Activated CD4-positive, alpha-beta memory T cell treated with anti-CD3 and anti-CD28 coated beads for 36 hours (primary cell): ENCODE measurements at regions of chr4 and their contacts with region 1.

Region 1: DNA sequence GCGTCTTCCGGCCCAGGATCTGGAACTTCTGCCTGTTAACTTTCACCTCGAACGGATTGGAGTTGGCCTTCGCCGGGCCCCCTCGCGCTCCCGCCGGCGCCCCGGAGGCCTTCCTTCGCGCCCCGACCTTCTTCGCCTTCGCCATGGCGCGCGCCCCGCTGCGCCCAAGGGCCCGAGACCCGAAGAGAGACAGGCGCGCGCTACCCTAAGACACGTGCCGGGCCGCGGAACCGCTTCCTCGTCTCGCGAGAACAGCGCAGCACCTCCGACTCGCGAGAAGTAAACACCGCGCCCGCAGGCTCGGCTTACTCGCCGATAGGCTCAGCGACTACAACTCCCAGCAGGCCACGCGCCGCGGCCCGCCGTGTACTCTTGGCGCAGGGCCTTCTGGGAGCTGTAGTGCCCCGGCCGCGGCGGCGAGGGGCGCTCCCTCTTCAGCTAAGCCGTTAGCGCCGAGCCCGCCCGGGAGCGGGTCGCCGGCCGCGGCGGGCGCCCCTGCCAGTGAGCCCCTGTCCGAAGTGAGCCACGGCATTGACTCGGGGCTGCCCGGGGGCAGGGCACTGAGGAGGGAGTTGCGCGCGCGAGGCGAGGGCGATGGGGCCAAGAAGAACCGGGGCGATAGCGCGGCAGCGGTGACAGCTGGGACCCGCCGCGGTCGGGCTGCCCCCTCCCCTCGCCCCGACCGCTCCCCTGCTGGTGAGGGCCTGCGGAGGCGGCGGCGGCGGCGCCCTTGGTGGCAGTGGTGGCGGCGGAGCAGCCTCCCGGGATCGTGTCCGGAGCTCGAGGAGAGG is at the starts of genes GRK4 and NOP14:
- DNase-seq: peak; percentile 98
- H3K4me3 Mint-ChIP-seq: peak within 1 kb of the TSS; percentile 78
- H3K27ac Mint-ChIP-seq: peak within 1 kb of the TSS; percentile 94
- H3K4me1 Mint-ChIP-seq: peaks cover 30% of the 10 kb centered on the region
- H3K27me3 Mint-ChIP-seq: no peaks in the 10 kb centered on the region
- total RNA-seq, gene GRK4: 2.3 to 3.0 TPM
- total RNA-seq, gene NOP14: 67.4 to 73.4 TPM

Region 2: GRCh38 chr4:2468445-2469192 is 494.8 kb before region 1 on chr4 and contains the start of gene RNF4:
- CTCF ChIA-PET with region 1: no interaction called
- POLR2A ChIA-PET with region 1: no interaction called
- intact Hi-C with region 1: loop called (anchors 5 kb)
- DNase-seq: peak; percentile 98
- H3K4me3 Mint-ChIP-seq: peak within 1 kb of the TSS; percentile 97
- H3K27ac Mint-ChIP-seq: peak within 1 kb of the TSS; percentile 98
- H3K4me1 Mint-ChIP-seq: peaks cover 42% of the 10 kb centered on the region
- H3K27me3 Mint-ChIP-seq: no peaks in the 10 kb centered on the region
- total RNA-seq, gene RNF4: 84.6 to 90.3 TPM

Region 3: GRCh38 chr4:2637956-2638552 is 325.3 kb before region 1 on chr4:
- CTCF ChIA-PET with region 1: no interaction called
- POLR2A ChIA-PET with region 1: no interaction called
- intact Hi-C with region 1: no loop called
- DNase-seq: no peak
- H3K4me3 Mint-ChIP-seq: no peak overlapping the region
- H3K27ac Mint-ChIP-seq: no peak overlapping the region
- H3K4me1 Mint-ChIP-seq: no peaks in the 10 kb centered on the region
- H3K27me3 Mint-ChIP-seq: no peaks in the 10 kb centered on the region

Region 4: DNA sequence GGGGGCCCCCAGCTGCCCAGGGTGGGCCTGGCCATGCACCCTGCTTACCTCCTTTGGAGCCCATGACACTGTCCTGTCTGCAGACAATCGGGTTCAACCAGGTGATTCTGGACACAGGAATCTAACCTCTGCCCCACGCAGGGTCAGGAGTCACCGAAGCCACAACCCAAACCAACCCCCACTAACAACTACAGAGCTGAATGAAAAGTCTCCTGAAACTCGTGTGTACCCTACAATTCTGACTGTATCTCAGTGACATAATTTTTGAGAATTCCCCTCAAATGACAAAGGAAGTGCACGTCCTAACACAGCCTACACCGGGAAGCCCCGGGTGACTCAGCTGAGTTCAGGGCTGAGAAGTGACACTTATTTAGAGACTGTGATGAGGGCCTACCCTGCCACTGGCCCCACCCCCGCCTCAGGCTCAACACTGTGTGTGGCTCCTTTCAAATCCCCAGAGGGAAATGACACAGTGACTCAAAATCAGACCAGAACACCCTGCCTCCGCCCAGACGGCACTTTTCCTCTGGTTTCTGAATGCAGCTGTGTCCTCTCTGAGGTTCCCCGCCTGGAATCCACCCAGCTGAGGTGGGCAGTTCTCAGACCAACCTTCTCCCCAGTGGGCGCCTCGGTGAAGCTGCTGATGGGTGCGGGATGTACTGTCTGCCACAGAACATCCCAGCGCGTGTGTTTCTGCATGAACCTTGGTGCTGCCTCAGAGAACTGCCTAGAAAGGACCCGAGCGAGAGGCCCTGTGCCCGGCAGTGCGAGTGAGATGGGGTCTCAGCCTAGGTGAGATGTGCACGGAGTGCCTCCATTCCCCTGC is 217.2 kb before region 1 on chr4:
- CTCF ChIA-PET with region 1: interaction called, 4 read pairs
- POLR2A ChIA-PET with region 1: interaction called, 10 read pairs
- intact Hi-C with region 1: loop called (anchors 1 kb)
- DNase-seq: peak; percentile 98
- H3K4me3 Mint-ChIP-seq: peak overlapping the region; percentile 54
- H3K27ac Mint-ChIP-seq: peak overlapping the region; percentile 90
- H3K4me1 Mint-ChIP-seq: peaks cover 61% of the 10 kb centered on the region
- H3K27me3 Mint-ChIP-seq: no peaks in the 10 kb centered on the region

Region 5: DNA sequence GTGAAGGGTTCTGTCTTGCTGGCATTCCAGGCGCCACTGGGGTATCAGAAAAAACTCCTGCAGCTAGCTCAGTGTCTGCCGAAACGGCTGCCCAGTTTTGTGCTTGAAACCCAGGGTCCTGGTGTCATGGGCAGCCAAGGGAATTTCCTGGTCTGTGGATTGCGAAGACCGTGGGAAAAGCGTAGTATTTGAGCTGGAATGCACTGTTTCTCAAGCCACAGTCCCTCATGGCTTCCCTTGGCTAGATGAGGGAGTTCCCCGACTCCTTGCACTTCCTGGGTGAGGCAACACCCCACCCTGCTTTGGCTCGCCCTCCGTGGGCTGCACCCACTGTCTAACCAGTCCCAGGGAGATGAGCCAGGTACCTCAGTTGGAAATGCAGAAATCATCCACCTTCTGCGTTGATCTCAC is 40.2 kb before region 1 on chr4:
- CTCF ChIA-PET with region 1: no interaction called
- POLR2A ChIA-PET with region 1: no interaction called
- intact Hi-C with region 1: no loop called
- DNase-seq: no peak
- H3K4me3 Mint-ChIP-seq: no peak overlapping the region
- H3K27ac Mint-ChIP-seq: peak overlapping the region; percentile 57
- H3K4me1 Mint-ChIP-seq: peaks cover 46% of the 10 kb centered on the region
- H3K27me3 Mint-ChIP-seq: no peaks in the 10 kb centered on the region

Region 6: GRCh38 chr4:2977211-2978088 is 14.1 kb after region 1 on chr4:
- CTCF ChIA-PET with region 1: interaction called, 25 read pairs
- POLR2A ChIA-PET with region 1: interaction called, 3 read pairs
- intact Hi-C with region 1: no loop called
- DNase-seq: no peak
- H3K4me3 Mint-ChIP-seq: no peak overlapping the region
- H3K27ac Mint-ChIP-seq: no peak overlapping the region
- H3K4me1 Mint-ChIP-seq: no peaks in the 10 kb centered on the region
- H3K27me3 Mint-ChIP-seq: no peaks in the 10 kb centered on the region

Region 7: GRCh38 chr4:3041192-3042142 is 78.1 kb after region 1 on chr4:
- CTCF ChIA-PET with region 1: interaction called, 15 read pairs
- POLR2A ChIA-PET with region 1: interaction called, 3 read pairs
- intact Hi-C with region 1: loop called (anchors 1 kb)
- DNase-seq: peak; percentile 62
- H3K4me3 Mint-ChIP-seq: peak overlapping the region; percentile 78
- H3K27ac Mint-ChIP-seq: no peak overlapping the region
- H3K4me1 Mint-ChIP-seq: peaks cover 60% of the 10 kb centered on the region
- H3K27me3 Mint-ChIP-seq: peaks cover 12% of the 10 kb centered on the region

Region 8: GRCh38 chr4:3085948-3086655 is 122.7 kb after region 1 on chr4:
- CTCF ChIA-PET with region 1: no interaction called
- POLR2A ChIA-PET with region 1: no interaction called
- intact Hi-C with region 1: loop called (anchors 2 kb)
- DNase-seq: no peak
- H3K4me3 Mint-ChIP-seq: peak overlapping the region; percentile 41
- H3K27ac Mint-ChIP-seq: peak overlapping the region; percentile 73
- H3K4me1 Mint-ChIP-seq: peaks cover 56% of the 10 kb centered on the region
- H3K27me3 Mint-ChIP-seq: no peaks in the 10 kb centered on the region